ENCODE measurements at regions of chr1 and their contacts with region 1.

Region 1: DNA sequence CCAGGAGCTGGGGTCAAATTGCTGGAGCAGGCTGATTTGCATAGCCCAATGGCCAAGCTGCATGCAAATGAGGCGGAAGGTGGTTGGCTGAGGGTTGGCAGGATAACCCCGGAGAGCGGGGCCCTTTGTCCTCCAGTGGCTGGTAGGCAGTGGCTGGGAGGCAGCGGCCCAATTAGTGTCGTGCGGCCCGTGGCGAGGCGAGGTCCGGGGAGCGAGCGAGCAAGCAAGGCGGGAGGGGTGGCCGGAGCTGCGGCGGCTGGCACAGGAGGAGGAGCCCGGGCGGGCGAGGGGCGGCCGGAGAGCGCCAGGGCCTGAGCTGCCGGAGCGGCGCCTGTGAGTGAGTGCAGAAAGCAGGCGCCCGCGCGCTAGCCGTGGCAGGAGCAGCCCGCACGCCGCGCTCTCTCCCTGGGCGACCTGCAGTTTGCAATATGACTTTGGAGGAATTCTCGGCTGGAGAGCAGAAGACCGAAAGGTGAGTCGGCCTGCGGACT is at the start of gene GADD45A:
- DNase-seq: peak; percentile 96
- H3K4me3 Mint-ChIP-seq: peak within 1 kb of the TSS; percentile 91
- H3K27ac Mint-ChIP-seq: peak within 1 kb of the TSS; percentile 99
- H3K4me1 Mint-ChIP-seq: peaks cover 45% of the 10 kb centered on the region
- H3K27me3 Mint-ChIP-seq: no peaks in the 10 kb centered on the region
- total RNA-seq, gene GADD45A: 47.3 and 48.2 TPM in 2 replicates

Region 2: GRCh38 chr1:66271216-66271903 is 1413.8 kb before region 1 on chr1:
- intact Hi-C with region 1: loop called (anchors 10 kb)
- DNase-seq: no peak
- H3K4me3 Mint-ChIP-seq: peak overlapping the region; percentile 38
- H3K27ac Mint-ChIP-seq: peak overlapping the region; percentile 85
- H3K4me1 Mint-ChIP-seq: peaks cover 67% of the 10 kb centered on the region
- H3K27me3 Mint-ChIP-seq: peaks cover 2% of the 10 kb centered on the region

Region 3: GRCh38 chr1:66764994-66765578 is 920.0 kb before region 1 on chr1:
- intact Hi-C with region 1: loop called (anchors 10 kb)
- DNase-seq: peak; percentile 20
- H3K4me3 Mint-ChIP-seq: no peak overlapping the region
- H3K27ac Mint-ChIP-seq: no peak overlapping the region
- H3K4me1 Mint-ChIP-seq: peaks cover 28% of the 10 kb centered on the region
- H3K27me3 Mint-ChIP-seq: no peaks in the 10 kb centered on the region

Region 4: DNA sequence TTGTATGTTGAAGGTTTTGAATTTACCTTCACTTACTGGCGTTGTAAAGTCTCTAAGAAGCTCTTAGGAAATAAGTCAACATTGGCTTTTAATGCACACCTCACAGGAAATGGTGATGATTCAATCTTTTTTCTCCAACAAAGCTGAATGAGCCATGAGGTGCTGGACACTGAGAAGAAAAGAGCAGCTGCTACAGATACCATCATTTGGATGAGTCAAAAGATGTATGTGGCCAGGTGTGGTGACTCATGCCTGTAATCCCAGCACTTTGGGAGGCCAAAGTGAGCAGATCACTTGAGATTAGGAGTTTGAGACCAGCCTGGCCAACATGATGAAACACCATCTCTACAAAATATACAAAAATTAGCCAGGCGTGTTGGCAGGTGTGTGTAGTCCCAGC is 522.2 kb before region 1 on chr1:
- intact Hi-C with region 1: loop called (anchors 1 kb)
- DNase-seq: peak; percentile 62
- H3K4me3 Mint-ChIP-seq: peak overlapping the region; percentile 55
- H3K27ac Mint-ChIP-seq: peak overlapping the region; percentile 93
- H3K4me1 Mint-ChIP-seq: peaks cover 65% of the 10 kb centered on the region
- H3K27me3 Mint-ChIP-seq: no peaks in the 10 kb centered on the region

Region 5: DNA sequence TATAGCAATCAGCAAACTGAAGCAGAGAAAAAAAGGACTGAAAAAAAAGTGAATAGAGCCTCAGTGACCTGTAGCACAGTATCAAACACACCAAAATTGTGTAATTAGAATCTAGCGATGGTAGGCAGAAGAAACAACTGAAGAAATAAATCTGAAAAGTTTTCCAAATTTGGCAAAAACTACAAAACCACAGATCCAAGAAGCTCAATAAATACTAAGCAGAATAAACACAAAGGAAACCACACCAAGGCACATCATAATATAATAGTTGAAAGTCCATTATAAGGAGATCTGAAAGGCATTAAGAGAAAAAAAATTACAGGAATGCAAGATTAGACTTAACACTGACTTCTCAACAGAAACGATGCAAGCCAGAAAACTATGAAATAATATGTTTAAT is 384.6 kb before region 1 on chr1:
- intact Hi-C with region 1: loop called (anchors 2 kb)
- DNase-seq: no peak
- H3K4me3 Mint-ChIP-seq: peak overlapping the region; percentile 35
- H3K27ac Mint-ChIP-seq: peak overlapping the region; percentile 63
- H3K4me1 Mint-ChIP-seq: peaks cover 88% of the 10 kb centered on the region
- H3K27me3 Mint-ChIP-seq: no peaks in the 10 kb centered on the region

Region 6: DNA sequence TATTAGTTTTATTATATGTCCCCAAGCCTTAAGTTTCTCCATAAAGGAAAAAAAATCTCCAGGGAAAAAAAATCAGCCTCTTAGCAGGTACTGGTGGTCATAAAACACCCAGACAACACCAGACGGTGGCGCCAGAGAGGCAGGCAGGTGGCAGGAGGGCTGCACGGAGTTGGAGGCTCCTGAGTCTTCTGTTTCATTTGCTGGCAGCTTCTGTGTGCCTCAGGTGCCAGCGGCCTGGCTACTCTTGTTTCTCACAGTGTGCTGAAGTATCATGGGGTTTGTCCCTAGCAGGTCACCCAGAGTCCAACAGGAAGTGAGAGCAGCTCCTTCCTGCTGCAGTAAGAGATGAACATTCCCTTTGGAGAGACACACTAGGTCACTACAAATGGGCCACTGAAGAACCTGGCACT is 123.4 kb before region 1 on chr1:
- intact Hi-C with region 1: loop called (anchors 1 kb)
- DNase-seq: peak; percentile 69
- H3K4me3 Mint-ChIP-seq: no peak overlapping the region
- H3K27ac Mint-ChIP-seq: no peak overlapping the region
- H3K4me1 Mint-ChIP-seq: peaks cover 5% of the 10 kb centered on the region
- H3K27me3 Mint-ChIP-seq: peaks cover 16% of the 10 kb centered on the region

Region 7: GRCh38 chr1:67735806-67736627 is 50.9 kb after region 1 on chr1:
- intact Hi-C with region 1: loop called (anchors 1 kb)
- DNase-seq: peak; percentile 28
- H3K4me3 Mint-ChIP-seq: peak overlapping the region; percentile 16
- H3K27ac Mint-ChIP-seq: peak overlapping the region; percentile 59
- H3K4me1 Mint-ChIP-seq: peaks cover 26% of the 10 kb centered on the region
- H3K27me3 Mint-ChIP-seq: peaks cover 1% of the 10 kb centered on the region

Region 8: GRCh38 chr1:67785847-67786753 is 101.0 kb after region 1 on chr1:
- intact Hi-C with region 1: no loop called
- DNase-seq: no peak
- H3K4me3 Mint-ChIP-seq: no peak overlapping the region
- H3K27ac Mint-ChIP-seq: no peak overlapping the region
- H3K4me1 Mint-ChIP-seq: no peaks in the 10 kb centered on the region
- H3K27me3 Mint-ChIP-seq: peaks cover 14% of the 10 kb centered on the region